B cell (primary cell): ENCODE measurements at regions of chr12 and their contacts with region 1.

Region 1: GRCh38 chr12:112409064-112409905 is at the start of gene RPL6:
- DNase-seq: peak; percentile 91
- ATAC-seq: peak; percentile 90
- H3K4me3 ChIP-seq: peak within 1 kb of the TSS; percentile 68 to 97 (median 96)
- H3K4me3 Mint-ChIP-seq: peak within 1 kb of the TSS; percentile 100
- H3K27ac ChIP-seq: peak within 1 kb of the TSS; percentile 83 to 91
- H3K27ac Mint-ChIP-seq: peak within 1 kb of the TSS; percentile 100
- H3K4me1 ChIP-seq: peaks cover 15 to 24% of the 10 kb centered on the region in 2 donors
- H3K4me1 Mint-ChIP-seq: peaks cover 28% of the 10 kb centered on the region
- H3K27me3 ChIP-seq: no peaks in the 10 kb centered on the region
- H3K27me3 Mint-ChIP-seq: no peaks in the 10 kb centered on the region
- CTCF ChIP-seq: no peak
- total RNA-seq, gene RPL6: 1,537 and 1,621 TPM in 2 replicates

Region 2: GRCh38 chr12:112198120-112198733 is 211.1 kb before region 1 on chr12:
- CTCF ChIA-PET with region 1: interaction called, 16 read pairs
- POLR2A ChIA-PET with region 1: no interaction called
- intact Hi-C with region 1: no loop called
- DNase-seq: peak; percentile 63
- ATAC-seq: peak; percentile 78
- H3K4me3 ChIP-seq: no peak overlapping the region
- H3K4me3 Mint-ChIP-seq: no peak overlapping the region
- H3K27ac ChIP-seq: no peak overlapping the region
- H3K27ac Mint-ChIP-seq: no peak overlapping the region
- H3K4me1 ChIP-seq: no peaks in the 10 kb centered on the region
- H3K4me1 Mint-ChIP-seq: no peaks in the 10 kb centered on the region
- H3K27me3 ChIP-seq: no peaks in the 10 kb centered on the region
- H3K27me3 Mint-ChIP-seq: no peaks in the 10 kb centered on the region
- CTCF ChIP-seq: peak; percentile 71

Region 3: GRCh38 chr12:112309828-112310227 is 99.5 kb before region 1 on chr12:
- CTCF ChIA-PET with region 1: no interaction called
- POLR2A ChIA-PET with region 1: no interaction called
- intact Hi-C with region 1: no loop called
- DNase-seq: no peak
- ATAC-seq: no peak
- H3K4me3 ChIP-seq: no peak overlapping the region
- H3K4me3 Mint-ChIP-seq: no peak overlapping the region
- H3K27ac ChIP-seq: no peak overlapping the region
- H3K27ac Mint-ChIP-seq: no peak overlapping the region
- H3K4me1 ChIP-seq: no peaks in the 10 kb centered on the region
- H3K4me1 Mint-ChIP-seq: peaks cover 6% of the 10 kb centered on the region
- H3K27me3 ChIP-seq: no peaks in the 10 kb centered on the region
- H3K27me3 Mint-ChIP-seq: no peaks in the 10 kb centered on the region
- CTCF ChIP-seq: no peak